ENCODE measurements at regions of chr19 and their contacts with region 1.

Region 1: GRCh38 chr19:35066691-35067563 is 25.4 kb downstream of the HPN start:
- DNase-seq: peak; percentile 90
- H3K4me3 Mint-ChIP-seq: no peak overlapping the region
- H3K27ac Mint-ChIP-seq: no peak overlapping the region
- H3K4me1 Mint-ChIP-seq: no peaks in the 10 kb centered on the region
- H3K27me3 Mint-ChIP-seq: no peaks in the 10 kb centered on the region
- CTCF ChIP-seq: peak; percentile 97

Region 2: GRCh38 chr19:34838753-34839431 is 228.0 kb before region 1 on chr19:
- CTCF ChIA-PET with region 1: no interaction called
- POLR2A ChIA-PET with region 1: no interaction called
- intact Hi-C with region 1: no loop called
- DNase-seq: no peak
- H3K4me3 Mint-ChIP-seq: no peak overlapping the region
- H3K27ac Mint-ChIP-seq: no peak overlapping the region
- H3K4me1 Mint-ChIP-seq: no peaks in the 10 kb centered on the region
- H3K27me3 Mint-ChIP-seq: no peaks in the 10 kb centered on the region
- CTCF ChIP-seq: no peak

Region 3: DNA sequence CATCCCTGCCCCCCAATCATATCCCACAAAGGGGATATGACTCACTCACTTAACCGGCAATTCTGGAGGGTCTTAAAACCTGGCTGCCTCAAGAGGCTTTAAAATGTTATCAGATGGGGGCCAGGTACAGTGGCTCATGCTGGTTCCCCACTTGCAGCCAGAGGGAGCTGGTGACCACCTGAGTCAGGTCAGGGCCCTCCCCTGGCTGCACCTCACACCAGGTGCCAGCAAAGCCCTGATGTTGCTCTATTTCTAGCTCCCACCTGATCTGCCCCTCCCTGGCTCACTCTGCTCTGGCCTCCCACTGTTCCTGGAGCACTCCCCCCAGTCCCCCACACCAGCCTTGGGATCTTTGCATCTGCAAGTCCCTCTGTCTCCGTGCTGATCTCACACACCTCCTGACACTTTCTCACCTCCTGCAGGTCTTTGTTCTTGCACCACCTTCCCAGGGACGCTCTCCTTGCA is 11.2 kb before region 1 on chr19:
- CTCF ChIA-PET with region 1: interaction called, 34 read pairs
- POLR2A ChIA-PET with region 1: interaction called, 4 read pairs
- intact Hi-C with region 1: no loop called
- DNase-seq: peak; percentile 34
- H3K4me3 Mint-ChIP-seq: no peak overlapping the region
- H3K27ac Mint-ChIP-seq: no peak overlapping the region
- H3K4me1 Mint-ChIP-seq: no peaks in the 10 kb centered on the region
- H3K27me3 Mint-ChIP-seq: peaks cover 18% of the 10 kb centered on the region
- CTCF ChIP-seq: peak; percentile 21

Region 4: GRCh38 chr19:35090506-35091237 is 23.7 kb after region 1 on chr19:
- CTCF ChIA-PET with region 1: interaction called, 34 read pairs
- POLR2A ChIA-PET with region 1: no interaction called
- intact Hi-C with region 1: loop called (anchors 2 kb)
- DNase-seq: peak; percentile 73
- H3K4me3 Mint-ChIP-seq: no peak overlapping the region
- H3K27ac Mint-ChIP-seq: no peak overlapping the region
- H3K4me1 Mint-ChIP-seq: peaks cover 10% of the 10 kb centered on the region
- H3K27me3 Mint-ChIP-seq: no peaks in the 10 kb centered on the region
- CTCF ChIP-seq: peak; percentile 46

Region 5: GRCh38 chr19:35114353-35115176 is 47.6 kb after region 1 on chr19:
- CTCF ChIA-PET with region 1: interaction called, 28 read pairs
- POLR2A ChIA-PET with region 1: interaction called, 6 read pairs
- intact Hi-C with region 1: no loop called
- DNase-seq: peak; percentile 68
- H3K4me3 Mint-ChIP-seq: peak overlapping the region; percentile 53
- H3K27ac Mint-ChIP-seq: peak overlapping the region; percentile 73
- H3K4me1 Mint-ChIP-seq: peaks cover 50% of the 10 kb centered on the region
- H3K27me3 Mint-ChIP-seq: no peaks in the 10 kb centered on the region
- CTCF ChIP-seq: peak; percentile 98

Region 6: DNA sequence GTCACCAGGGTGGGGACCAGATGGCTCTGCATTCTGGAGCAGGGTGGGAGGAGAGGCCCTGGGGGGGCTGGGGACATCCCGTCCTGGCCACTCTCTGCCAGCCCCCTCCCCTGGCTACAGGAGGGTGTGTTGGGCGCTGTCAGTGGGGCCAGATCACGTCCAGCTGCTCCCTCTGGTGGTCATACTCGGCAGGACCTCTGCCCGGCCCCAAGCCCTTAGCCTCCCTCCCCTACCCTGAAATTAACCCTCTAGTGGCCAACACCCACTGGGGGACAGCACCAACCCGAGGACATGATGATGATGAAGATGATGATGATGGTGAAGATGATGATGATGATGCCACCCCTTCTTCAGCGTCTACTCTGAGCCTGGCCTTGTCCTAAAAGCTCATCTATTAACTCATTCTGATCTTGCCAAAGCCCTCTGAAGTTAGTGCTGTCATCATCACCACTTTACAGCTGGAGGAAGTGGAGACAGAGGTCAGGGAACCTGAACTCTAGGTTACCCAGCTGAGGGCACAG is 68.5 kb after region 1 on chr19:
- CTCF ChIA-PET with region 1: interaction called, 80 read pairs
- POLR2A ChIA-PET with region 1: interaction called, 7 read pairs
- intact Hi-C with region 1: loop called (anchors 1 kb)
- DNase-seq: peak; percentile 73
- H3K4me3 Mint-ChIP-seq: no peak overlapping the region
- H3K27ac Mint-ChIP-seq: no peak overlapping the region
- H3K4me1 Mint-ChIP-seq: peaks cover 6% of the 10 kb centered on the region
- H3K27me3 Mint-ChIP-seq: peaks cover 4% of the 10 kb centered on the region
- CTCF ChIP-seq: peak; percentile 79

Region 7: GRCh38 chr19:35247526-35248306 is 180.8 kb after region 1 on chr19:
- CTCF ChIA-PET with region 1: interaction called, 5 read pairs
- POLR2A ChIA-PET with region 1: no interaction called
- intact Hi-C with region 1: loop called (anchors 10 kb)
- DNase-seq: peak; percentile 90
- H3K4me3 Mint-ChIP-seq: peak overlapping the region; percentile 92
- H3K27ac Mint-ChIP-seq: peak overlapping the region; percentile 99
- H3K4me1 Mint-ChIP-seq: peaks cover 16% of the 10 kb centered on the region
- H3K27me3 Mint-ChIP-seq: no peaks in the 10 kb centered on the region
- CTCF ChIP-seq: peak; percentile 51